CD4-positive, alpha-beta T cell (primary cell): ENCODE measurements at regions of chr16 and their contacts with region 1.

Region 1: GRCh38 chr16:1772736-1773584 is at the starts of genes EME2 and MRPS34:
- DNase-seq: peak; percentile 61 to 90 (median 77)
- ATAC-seq: peak; percentile 49
- H3K4me3 ChIP-seq: peak within 1 kb of the TSS; percentile 89
- H3K4me3 Mint-ChIP-seq: peak within 1 kb of the TSS; percentile 98
- H3K27ac ChIP-seq: peak within 1 kb of the TSS; percentile 55 to 69
- H3K27ac Mint-ChIP-seq: peak within 1 kb of the TSS; percentile 92
- H3K4me1 ChIP-seq: peaks cover 42% of the 10 kb centered on the region
- H3K4me1 Mint-ChIP-seq: peaks cover 16% of the 10 kb centered on the region
- H3K27me3 ChIP-seq: no peaks in the 10 kb centered on the region
- H3K27me3 Mint-ChIP-seq: no peaks in the 10 kb centered on the region
- CTCF ChIP-seq: peak; percentile 79
- total RNA-seq, gene EME2: 28.6 to 30.8 TPM
- total RNA-seq, gene MRPS34: 25.5 to 26.9 TPM

Region 2: DNA sequence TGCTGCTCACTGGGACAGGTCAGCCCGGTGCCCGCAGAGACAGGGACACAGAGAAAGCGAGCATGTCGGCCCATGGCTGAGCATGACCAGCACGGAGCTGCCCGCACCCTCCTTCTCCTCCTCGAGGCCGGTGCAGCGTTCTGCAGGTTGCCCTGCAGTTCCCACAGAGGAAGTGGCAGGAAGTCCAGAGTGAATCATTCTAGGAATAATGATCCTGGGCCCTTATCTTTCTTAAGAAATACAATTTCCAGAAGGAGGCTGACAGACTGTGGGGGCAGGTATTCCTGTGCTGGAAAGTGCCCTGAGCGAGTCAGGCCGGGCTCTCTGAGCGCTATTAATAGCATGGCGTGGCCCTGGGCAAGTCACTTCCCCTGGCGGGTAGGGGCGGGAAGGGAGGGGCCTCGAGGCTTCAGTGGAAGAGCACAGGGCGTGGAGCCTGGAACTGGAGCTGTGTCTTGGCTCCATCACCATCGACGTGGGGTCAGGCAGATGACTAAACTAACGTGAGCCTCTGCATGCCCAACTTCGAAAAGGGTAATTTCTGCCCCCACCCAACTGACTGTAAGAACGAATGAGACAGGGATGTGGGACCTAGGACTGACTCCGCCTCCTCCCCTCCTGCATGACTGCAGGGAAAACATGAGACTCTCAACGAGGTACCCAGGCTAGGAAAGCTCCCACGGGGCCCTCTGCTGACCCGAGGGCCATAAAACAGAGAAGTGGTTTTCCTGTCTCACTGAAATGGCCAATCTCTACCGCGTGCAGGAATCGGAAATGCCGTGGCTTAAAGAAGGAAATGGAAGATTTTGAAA is 229.7 kb before region 1 on chr16:
- CTCF ChIA-PET with region 1: no interaction called
- POLR2A ChIA-PET with region 1: no interaction called
- intact Hi-C with region 1: loop called in 1 of 2 experiments (anchors 5 kb)
- DNase-seq: peak in 9 of 14 experiments; percentile 24 to 76 (median 45)
- ATAC-seq: peak; percentile 66
- H3K4me3 ChIP-seq: peak overlapping the region; percentile 10
- H3K4me3 Mint-ChIP-seq: peak overlapping the region; percentile 54
- H3K27ac ChIP-seq: peak overlapping the region; percentile 56 to 58
- H3K27ac Mint-ChIP-seq: peak overlapping the region; percentile 80
- H3K4me1 ChIP-seq: peaks cover 99% of the 10 kb centered on the region
- H3K4me1 Mint-ChIP-seq: peaks cover 81% of the 10 kb centered on the region
- H3K27me3 ChIP-seq: no peaks in the 10 kb centered on the region
- H3K27me3 Mint-ChIP-seq: no peaks in the 10 kb centered on the region
- CTCF ChIP-seq: no peak

Region 3: DNA sequence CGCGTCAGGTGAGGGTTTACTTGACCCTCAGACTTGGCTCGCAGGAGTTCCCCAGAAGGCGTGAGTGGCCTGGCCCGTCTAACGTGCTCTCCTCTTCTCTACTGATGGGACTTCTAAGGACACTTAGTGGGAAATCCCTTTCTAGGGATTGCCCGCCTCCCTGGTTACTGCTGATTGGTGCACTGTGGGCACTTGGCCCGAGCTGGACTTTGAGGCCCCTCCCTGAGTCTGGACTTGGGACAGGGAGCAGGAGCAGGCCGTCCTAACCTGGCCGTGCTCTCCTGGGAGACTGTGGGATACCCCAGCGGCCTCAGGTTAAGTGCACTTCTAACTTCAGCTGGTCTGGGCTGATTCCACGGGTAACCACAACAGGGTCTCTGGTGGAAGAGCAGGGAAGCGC is 175.8 kb before region 1 on chr16:
- CTCF ChIA-PET with region 1: no interaction called
- POLR2A ChIA-PET with region 1: no interaction called
- intact Hi-C with region 1: no loop called
- DNase-seq: no peak
- ATAC-seq: no peak
- H3K4me3 ChIP-seq: no peak overlapping the region
- H3K4me3 Mint-ChIP-seq: no peak overlapping the region
- H3K27ac ChIP-seq: no peak overlapping the region
- H3K27ac Mint-ChIP-seq: no peak overlapping the region
- H3K4me1 ChIP-seq: no peaks in the 10 kb centered on the region
- H3K4me1 Mint-ChIP-seq: no peaks in the 10 kb centered on the region
- H3K27me3 ChIP-seq: no peaks in the 10 kb centered on the region
- H3K27me3 Mint-ChIP-seq: no peaks in the 10 kb centered on the region
- CTCF ChIP-seq: no peak

Region 4: GRCh38 chr16:1705688-1706385 is 67.1 kb before region 1 on chr16 and contains the start of gene MAPK8IP3:
- CTCF ChIA-PET with region 1: interaction called, 5 read pairs
- POLR2A ChIA-PET with region 1: interaction called, 7 read pairs
- intact Hi-C with region 1: loop called in 1 of 2 experiments (anchors 5 kb)
- DNase-seq: peak; percentile 84 to 99 (median 94)
- ATAC-seq: peak; percentile 75
- H3K4me3 ChIP-seq: peak within 1 kb of the TSS; percentile 98
- H3K4me3 Mint-ChIP-seq: peak within 1 kb of the TSS; percentile 96
- H3K27ac ChIP-seq: peak within 1 kb of the TSS; percentile 77 to 79
- H3K27ac Mint-ChIP-seq: peak within 1 kb of the TSS; percentile 97
- H3K4me1 ChIP-seq: peaks cover 35% of the 10 kb centered on the region
- H3K4me1 Mint-ChIP-seq: peaks cover 38% of the 10 kb centered on the region
- H3K27me3 ChIP-seq: no peaks in the 10 kb centered on the region
- H3K27me3 Mint-ChIP-seq: no peaks in the 10 kb centered on the region
- CTCF ChIP-seq: peak; percentile 70
- total RNA-seq, gene MAPK8IP3: 290 to 297 TPM

Region 5: DNA sequence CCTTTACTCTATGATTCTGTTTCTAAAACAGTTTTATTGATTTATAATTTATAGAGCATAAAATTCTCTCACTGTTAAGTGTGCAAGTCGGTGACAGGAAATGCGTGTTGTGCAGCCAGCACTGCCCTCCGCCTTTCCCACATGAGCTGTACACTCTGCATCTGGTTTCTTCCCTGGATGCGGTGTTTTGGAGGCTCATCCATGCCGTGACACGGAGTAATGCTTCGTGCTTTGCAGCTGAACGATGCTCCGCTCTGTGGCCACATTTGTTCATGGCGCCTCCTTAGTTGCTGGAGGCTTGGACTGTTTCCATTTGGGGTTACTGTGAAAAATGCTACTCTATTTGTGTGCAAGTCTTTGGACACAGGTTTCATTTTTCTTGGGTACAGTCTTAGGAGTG is 27.7 kb after region 1 on chr16:
- CTCF ChIA-PET with region 1: no interaction called
- POLR2A ChIA-PET with region 1: no interaction called
- intact Hi-C with region 1: no loop called
- DNase-seq: no peak
- ATAC-seq: no peak
- H3K4me3 ChIP-seq: no peak overlapping the region
- H3K4me3 Mint-ChIP-seq: no peak overlapping the region
- H3K27ac ChIP-seq: no peak overlapping the region
- H3K27ac Mint-ChIP-seq: no peak overlapping the region
- H3K4me1 ChIP-seq: no peaks in the 10 kb centered on the region
- H3K4me1 Mint-ChIP-seq: no peaks in the 10 kb centered on the region
- H3K27me3 ChIP-seq: no peaks in the 10 kb centered on the region
- H3K27me3 Mint-ChIP-seq: no peaks in the 10 kb centered on the region
- CTCF ChIP-seq: no peak

Region 6: GRCh38 chr16:1929578-1930337 is 156.8 kb after region 1 on chr16:
- CTCF ChIA-PET with region 1: no interaction called
- POLR2A ChIA-PET with region 1: no interaction called
- intact Hi-C with region 1: loop called (anchors 2 kb)
- DNase-seq: peak; percentile 79 to 96 (median 92)
- ATAC-seq: peak; percentile 100
- H3K4me3 ChIP-seq: peak overlapping the region; percentile 42
- H3K4me3 Mint-ChIP-seq: peak overlapping the region; percentile 88
- H3K27ac ChIP-seq: no peak overlapping the region
- H3K27ac Mint-ChIP-seq: no peak overlapping the region
- H3K4me1 ChIP-seq: peaks cover 11% of the 10 kb centered on the region
- H3K4me1 Mint-ChIP-seq: no peaks in the 10 kb centered on the region
- H3K27me3 ChIP-seq: peaks cover 0 to under 1% of the 10 kb centered on the region in 2 experiments
- H3K27me3 Mint-ChIP-seq: peaks cover 2% of the 10 kb centered on the region
- CTCF ChIP-seq: peak; percentile 94

Region 7: DNA sequence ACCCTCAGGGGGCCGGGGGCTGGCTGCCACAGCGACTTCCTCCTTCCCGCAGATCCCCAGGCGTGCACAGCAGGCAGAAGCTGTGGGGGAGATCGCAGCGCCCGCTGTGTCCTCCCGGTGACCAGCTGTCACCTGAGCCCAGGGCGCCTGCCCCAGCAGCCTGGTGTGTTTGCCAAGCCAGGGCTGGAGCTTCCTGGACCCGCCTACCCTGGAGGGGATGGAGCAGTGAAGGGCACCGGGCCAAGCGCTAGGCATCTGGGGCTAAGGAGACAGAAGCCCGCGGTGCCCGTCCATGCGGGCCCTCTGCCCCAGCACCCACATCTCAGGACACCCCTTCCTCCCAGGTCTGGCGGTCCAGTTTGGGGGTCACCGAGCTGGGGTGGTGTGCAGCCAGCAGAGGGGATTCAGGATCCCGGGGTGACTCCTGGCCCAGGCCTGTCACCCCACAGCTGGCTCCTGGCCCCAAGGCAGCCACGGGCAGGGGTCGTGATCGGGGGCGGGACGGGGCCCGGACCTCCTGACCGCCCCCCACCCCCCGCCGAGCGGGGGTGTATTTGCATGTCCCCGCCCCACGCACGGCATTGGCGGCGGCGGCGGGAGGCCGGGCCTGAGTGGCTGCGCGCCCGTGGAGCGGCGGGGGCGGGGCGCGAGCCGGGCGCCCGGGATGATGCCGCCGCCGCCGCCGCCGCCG is 375.2 kb after region 1 on chr16 and contains the start of gene RAB26:
- CTCF ChIA-PET with region 1: no interaction called
- POLR2A ChIA-PET with region 1: no interaction called
- intact Hi-C with region 1: loop called in 1 of 2 experiments (anchors 10 kb)
- DNase-seq: peak in 11 of 14 experiments; percentile 39 to 82 (median 57)
- ATAC-seq: peak; percentile 87
- H3K4me3 ChIP-seq: peak within 1 kb of the TSS; percentile 51
- H3K4me3 Mint-ChIP-seq: peak within 1 kb of the TSS; percentile 42
- H3K27ac ChIP-seq: no peak within 1 kb of the TSS
- H3K27ac Mint-ChIP-seq: no peak within 1 kb of the TSS
- H3K4me1 ChIP-seq: peaks cover 53% of the 10 kb centered on the region
- H3K4me1 Mint-ChIP-seq: peaks cover 9% of the 10 kb centered on the region
- H3K27me3 ChIP-seq: no peaks in the 10 kb centered on the region
- H3K27me3 Mint-ChIP-seq: no peaks in the 10 kb centered on the region
- CTCF ChIP-seq: no peak
- total RNA-seq, gene RAB26: not detected